Calu3 (cell line): ENCODE measurements at regions of chr6 and their contacts with region 1.

Region 1: GRCh38 chr6:106223300-106223930 is 102.1 kb downstream of the ATG5 start:
- DNase-seq: peak; percentile 70
- H3K4me3 Mint-ChIP-seq: no peak overlapping the region
- H3K27ac Mint-ChIP-seq: no peak overlapping the region
- H3K4me1 Mint-ChIP-seq: peaks cover 13% of the 10 kb centered on the region
- H3K27me3 Mint-ChIP-seq: no peaks in the 10 kb centered on the region
- CTCF ChIP-seq: peak; percentile 61

Region 2: DNA sequence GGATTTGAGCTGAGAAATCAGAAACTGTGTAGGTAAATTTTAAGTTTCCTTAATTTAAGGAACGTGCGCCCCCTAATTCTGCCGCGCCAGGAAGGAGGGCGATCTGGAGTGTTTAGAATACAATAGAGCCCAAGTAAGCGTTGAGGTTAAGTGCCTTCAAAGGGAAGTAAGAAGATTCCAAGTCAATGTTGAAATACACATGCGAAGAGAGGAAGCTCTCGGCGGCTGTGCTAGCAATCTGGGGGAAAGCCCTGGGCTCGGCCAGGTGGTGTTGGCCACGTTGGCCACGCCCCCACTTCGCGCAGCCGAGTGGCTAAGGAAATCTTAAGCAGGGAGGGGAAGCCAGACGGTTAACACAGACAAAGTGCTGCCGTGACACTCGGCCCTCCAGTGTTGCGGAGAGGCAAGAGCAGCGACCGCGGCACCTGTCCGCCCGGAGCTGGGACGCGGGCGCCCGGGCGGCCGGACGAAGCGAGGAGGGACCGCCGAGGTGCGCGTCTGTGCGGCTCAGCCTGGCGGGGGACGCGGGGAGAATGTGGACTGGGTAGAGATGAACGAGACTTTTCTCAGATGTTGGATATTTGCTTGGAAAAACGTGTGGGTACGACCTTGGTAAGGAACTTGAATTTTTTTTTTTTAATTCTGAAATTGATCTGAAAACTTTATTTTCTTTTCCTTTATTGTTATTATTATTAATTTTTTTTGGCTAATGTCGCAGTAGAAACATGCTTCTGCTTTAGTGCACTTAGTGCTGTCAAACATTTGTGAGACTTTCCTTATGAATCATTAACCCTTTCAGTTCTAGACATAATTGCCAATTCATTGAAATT is 137.2 kb before region 1 on chr6 and contains the start of gene PRDM1:
- CTCF ChIA-PET with region 1: interaction called, 12 read pairs
- intact Hi-C with region 1: no loop called
- DNase-seq: peak; percentile 89
- H3K4me3 Mint-ChIP-seq: peak within 1 kb of the TSS; percentile 97
- H3K27ac Mint-ChIP-seq: peak within 1 kb of the TSS; percentile 57
- H3K4me1 Mint-ChIP-seq: peaks cover 28% of the 10 kb centered on the region
- H3K27me3 Mint-ChIP-seq: peaks cover 27% of the 10 kb centered on the region
- CTCF ChIP-seq: no peak
- total RNA-seq, gene PRDM1: 0.40 and 1.1 TPM in 2 replicates

Region 3: GRCh38 chr6:106097411-106098231 is 125.8 kb before region 1 on chr6:
- CTCF ChIA-PET with region 1: no interaction called
- intact Hi-C with region 1: loop called (anchors 5 kb)
- DNase-seq: no peak
- H3K4me3 Mint-ChIP-seq: peak overlapping the region; percentile 71
- H3K27ac Mint-ChIP-seq: peak overlapping the region; percentile 67
- H3K4me1 Mint-ChIP-seq: peaks cover 28% of the 10 kb centered on the region
- H3K27me3 Mint-ChIP-seq: no peaks in the 10 kb centered on the region
- CTCF ChIP-seq: no peak

Region 4: DNA sequence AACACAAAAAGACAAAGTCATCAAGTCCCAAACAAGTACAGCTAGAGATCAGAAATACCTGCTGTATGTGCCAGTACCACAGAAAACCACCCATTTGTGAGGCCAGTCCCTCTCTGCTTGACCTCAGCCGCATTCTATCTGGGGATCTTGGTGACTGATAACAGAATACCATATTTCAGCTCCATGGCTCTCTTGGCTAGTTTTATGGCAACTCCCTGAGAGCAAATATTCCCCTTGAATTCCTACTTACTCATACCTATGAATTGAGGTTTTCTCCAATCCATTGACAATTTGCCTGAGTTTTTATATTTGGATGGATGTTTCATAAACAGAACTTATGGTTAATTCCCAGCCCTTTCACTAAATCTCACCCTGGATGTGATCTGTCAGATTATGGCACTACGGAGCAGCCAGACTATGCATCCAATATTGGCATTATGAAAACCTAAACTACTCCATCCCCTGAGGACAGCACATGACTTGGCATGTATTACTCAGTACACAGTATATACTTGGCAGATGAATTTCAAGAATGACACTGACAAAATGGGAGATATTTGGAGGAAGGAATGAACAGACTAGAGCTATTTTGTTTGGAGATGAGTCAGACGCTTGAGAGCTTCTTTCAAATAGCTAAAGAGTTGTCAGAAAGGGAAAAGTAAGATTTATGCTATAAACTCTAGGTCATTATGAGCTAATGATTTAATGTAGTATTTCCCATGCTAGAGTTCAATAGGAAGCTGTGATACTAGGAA is 41.6 kb before region 1 on chr6:
- CTCF ChIA-PET with region 1: no interaction called
- intact Hi-C with region 1: no loop called
- DNase-seq: no peak
- H3K4me3 Mint-ChIP-seq: no peak overlapping the region
- H3K27ac Mint-ChIP-seq: no peak overlapping the region
- H3K4me1 Mint-ChIP-seq: peaks cover 4% of the 10 kb centered on the region
- H3K27me3 Mint-ChIP-seq: no peaks in the 10 kb centered on the region
- CTCF ChIP-seq: no peak

Region 5: DNA sequence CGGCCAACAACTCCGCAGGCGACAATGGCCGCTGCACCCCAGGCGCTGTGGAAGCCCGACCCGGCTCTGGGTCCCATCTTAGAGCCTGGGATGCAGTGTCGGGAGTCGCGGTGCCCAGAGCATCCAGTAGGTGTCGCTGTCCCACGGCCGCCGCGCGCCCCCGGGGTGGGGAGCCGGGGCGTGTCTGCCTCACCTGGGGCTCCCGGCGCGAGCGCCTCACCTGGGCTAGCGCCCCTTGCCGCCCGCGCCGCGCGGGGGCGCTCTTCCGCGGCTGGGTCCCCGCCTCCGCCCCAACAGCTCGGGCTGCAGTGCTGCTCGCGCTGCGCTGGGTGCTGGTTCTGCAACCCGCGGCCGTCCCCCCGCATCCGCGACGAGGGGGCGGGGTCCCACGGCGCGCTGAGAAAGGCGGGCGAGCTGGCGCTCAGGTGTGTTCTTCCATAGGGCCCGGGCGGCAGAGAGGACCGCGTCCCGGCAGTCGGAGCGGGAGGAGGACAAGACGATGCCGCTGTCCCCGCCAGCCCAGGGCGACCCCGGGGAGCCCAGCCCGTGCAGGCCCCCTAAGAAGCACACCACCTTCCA is 137.1 kb after region 1 on chr6 and contains the start of gene CRYBG1:
- CTCF ChIA-PET with region 1: no interaction called
- intact Hi-C with region 1: no loop called
- DNase-seq: peak; percentile 96
- H3K4me3 Mint-ChIP-seq: peak within 1 kb of the TSS; percentile 92
- H3K27ac Mint-ChIP-seq: no peak within 1 kb of the TSS
- H3K4me1 Mint-ChIP-seq: peaks cover 13% of the 10 kb centered on the region
- H3K27me3 Mint-ChIP-seq: no peaks in the 10 kb centered on the region
- CTCF ChIP-seq: peak; percentile 97
- total RNA-seq, gene CRYBG1: 40.7 and 45.4 TPM in 2 replicates